Ovary (tissue), 10 donors: ENCODE measurements at regions of chr20 and their contacts with region 1.

Region 1: GRCh38 chr20:17699931-17700657 is at the start of gene BANF2:
- DNase-seq: no peak
- H3K4me3 ChIP-seq: no peak within 1 kb of the TSS
- H3K27ac ChIP-seq: no peak within 1 kb of the TSS
- H3K4me1 ChIP-seq: no peaks in the 10 kb centered on the region
- H3K27me3 ChIP-seq: no peaks in the 10 kb centered on the region
- CTCF ChIP-seq: no peak
- EP300 ChIP-seq: no peak
- POLR2A ChIP-seq: no peak
- total RNA-seq, gene BANF2: not detected

Region 2: DNA sequence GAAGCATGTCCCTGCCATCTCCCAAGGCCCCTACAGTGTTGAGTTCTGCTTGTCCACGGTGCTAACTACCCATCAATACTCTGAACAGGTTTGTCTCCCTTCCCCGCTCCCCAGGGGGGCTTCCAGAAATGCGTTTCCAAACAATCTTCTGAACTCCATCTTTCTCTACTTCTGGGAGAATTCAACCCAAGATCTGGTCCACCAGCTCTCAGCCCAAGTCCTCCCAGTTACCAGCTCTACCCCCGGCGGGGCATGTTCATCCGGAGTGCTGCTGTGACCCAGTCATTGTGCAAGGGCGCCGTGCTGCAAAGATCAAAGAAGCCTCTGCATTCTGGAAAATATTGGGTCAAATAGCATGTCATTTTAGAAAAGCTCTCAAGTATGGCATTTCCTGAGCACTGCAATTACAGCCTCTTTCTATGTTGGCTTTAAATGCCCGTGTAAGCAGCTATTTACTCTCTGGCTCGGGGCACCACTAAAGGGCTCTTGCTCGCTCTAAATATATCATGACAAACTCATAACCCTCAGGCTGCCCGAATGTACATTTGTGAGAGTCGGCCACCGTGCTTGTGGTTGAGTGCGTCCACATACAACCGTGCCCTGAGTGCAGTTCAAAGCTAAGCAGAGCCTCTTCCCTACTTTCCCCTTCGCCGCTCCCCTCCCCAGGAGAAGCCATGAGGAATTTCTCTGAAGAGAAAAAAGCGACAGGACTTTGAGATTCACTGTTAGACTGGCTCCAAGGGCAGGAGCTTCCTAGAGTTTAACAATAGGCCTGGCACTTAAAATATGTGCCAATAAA is 71.3 kb after region 1 on chr20:
- intact Hi-C with region 1: loop called in 1 of 4 experiments (anchors 5 kb)
- DNase-seq: no peak
- H3K4me3 ChIP-seq: no peak overlapping the region
- H3K27ac ChIP-seq: no peak overlapping the region
- H3K4me1 ChIP-seq: no peaks in the 10 kb centered on the region
- H3K27me3 ChIP-seq: no peaks in the 10 kb centered on the region
- CTCF ChIP-seq: no peak
- EP300 ChIP-seq: no peak
- POLR2A ChIP-seq: no peak

Region 3: DNA sequence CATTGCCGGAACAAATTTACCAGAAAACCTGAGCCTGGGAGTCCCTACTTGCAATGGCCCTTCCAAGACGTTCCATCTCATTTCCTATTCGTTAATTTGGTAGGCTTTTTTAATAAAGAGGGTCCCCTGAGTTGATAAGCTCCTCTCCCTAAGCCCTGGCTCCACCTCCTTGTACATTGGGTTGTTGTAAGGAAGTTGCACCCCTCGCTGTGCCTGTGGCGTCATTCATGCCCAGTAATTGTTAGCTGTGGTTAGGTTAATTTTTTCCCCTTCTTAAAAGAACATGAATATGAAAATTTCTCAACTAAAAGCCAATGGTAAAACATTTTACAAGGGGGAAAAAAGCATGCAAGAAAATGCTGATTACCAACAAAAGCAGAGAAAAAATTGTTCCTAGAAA is 1604.3 kb after region 1 on chr20:
- intact Hi-C with region 1: no loop called
- DNase-seq: no peak
- H3K4me3 ChIP-seq: no peak overlapping the region
- H3K27ac ChIP-seq: no peak overlapping the region
- H3K4me1 ChIP-seq: no peaks in the 10 kb centered on the region
- H3K27me3 ChIP-seq: no peaks in the 10 kb centered on the region
- CTCF ChIP-seq: no peak
- EP300 ChIP-seq: no peak
- POLR2A ChIP-seq: no peak